Dendritic cell treated with granulocyte-macrophage colony-stimulating factor and Interleukin-4, amounts not matched to agents 40 ng/mL and 50 ng/mL, for 4 days (primary cell): ENCODE measurements at regions of chr20 and their contacts with region 1.

Region 1: GRCh38 chr20:37081717-37082289 is 14.0 kb downstream of the RBL1 start:
- H3K4me3 Mint-ChIP-seq: no peak overlapping the region
- H3K27ac Mint-ChIP-seq: no peak overlapping the region
- H3K4me1 Mint-ChIP-seq: peaks cover 12% of the 10 kb centered on the region
- H3K27me3 Mint-ChIP-seq: no peaks in the 10 kb centered on the region

Region 2: GRCh38 chr20:36932476-36933426 is 149.1 kb before region 1 on chr20:
- intact Hi-C with region 1: loop called (anchors 10 kb)
- H3K4me3 Mint-ChIP-seq: peak overlapping the region; percentile 2
- H3K27ac Mint-ChIP-seq: peak overlapping the region; percentile 77
- H3K4me1 Mint-ChIP-seq: peaks cover 77% of the 10 kb centered on the region
- H3K27me3 Mint-ChIP-seq: no peaks in the 10 kb centered on the region

Region 3: DNA sequence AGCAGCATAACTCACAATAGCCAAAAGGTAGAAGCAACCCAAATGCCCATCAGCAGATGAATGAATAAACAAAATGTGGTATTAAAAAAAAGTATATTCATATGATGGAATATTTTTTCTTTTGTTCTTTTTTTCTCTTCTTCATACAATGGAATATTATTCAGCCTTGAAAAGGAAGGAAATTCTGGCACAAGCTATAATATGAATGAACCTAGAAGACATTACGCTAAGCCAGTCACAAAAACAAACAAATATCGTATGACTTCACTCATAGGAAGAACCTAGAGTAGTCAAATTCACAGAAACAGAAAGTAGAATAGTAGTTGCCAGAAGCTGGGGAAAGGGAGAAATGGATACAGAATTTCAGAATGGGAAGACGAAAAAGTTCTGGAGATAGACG is 49.7 kb before region 1 on chr20:
- intact Hi-C with region 1: loop called (anchors 10 kb)
- H3K4me3 Mint-ChIP-seq: no peak overlapping the region
- H3K27ac Mint-ChIP-seq: no peak overlapping the region
- H3K4me1 Mint-ChIP-seq: no peaks in the 10 kb centered on the region
- H3K27me3 Mint-ChIP-seq: no peaks in the 10 kb centered on the region